ENCODE measurements at regions of chr4 and their contacts with region 1.

Region 1: GRCh38 chr4:21790438-21791029 is 158.0 kb downstream of the KCNIP4 start:
- DNase-seq: no peak
- H3K4me3 ChIP-seq: no peak overlapping the region
- H3K27ac ChIP-seq: no peak overlapping the region
- H3K4me1 ChIP-seq: no peaks in the 10 kb centered on the region
- H3K27me3 ChIP-seq: no peaks in the 10 kb centered on the region
- CTCF ChIP-seq: peak in 2 of 3 experiments; percentile 42 to 50
- EP300 ChIP-seq: no peak
- POLR2A ChIP-seq: no peak

Region 2: GRCh38 chr4:22389240-22389870 is 598.8 kb after region 1 on chr4:
- intact Hi-C with region 1: loop called (anchors 2 kb)
- DNase-seq: no peak
- H3K4me3 ChIP-seq: no peak overlapping the region
- H3K27ac ChIP-seq: no peak overlapping the region
- H3K4me1 ChIP-seq: peaks cover 0 to 14% (median 7%) of the 10 kb centered on the region in 4 donors
- H3K27me3 ChIP-seq: no peaks in the 10 kb centered on the region
- CTCF ChIP-seq: peak; percentile 62 to 75 (median 71)
- EP300 ChIP-seq: no peak
- POLR2A ChIP-seq: no peak

Region 3: GRCh38 chr4:22692736-22693135 is 902.2 kb after region 1 on chr4 and contains the start of gene GBA3:
- intact Hi-C with region 1: loop called (anchors 2 kb)
- DNase-seq: no peak
- H3K4me3 ChIP-seq: no peak within 1 kb of the TSS
- H3K27ac ChIP-seq: no peak within 1 kb of the TSS
- H3K4me1 ChIP-seq: no peaks in the 10 kb centered on the region
- H3K27me3 ChIP-seq: no peaks in the 10 kb centered on the region
- CTCF ChIP-seq: no peak
- EP300 ChIP-seq: no peak
- POLR2A ChIP-seq: no peak
- total RNA-seq, gene GBA3: not detected

Measured in esophagus muscularis mucosa (tissue), 4 donors.